ENCODE measurements at regions of chr15 and their contacts with region 1.

Region 1: GRCh38 chr15:67914537-67915460 is 75.0 kb upstream of the RNU6-1 start:
- DNase-seq: peak; percentile 29 to 80
- H3K4me3 ChIP-seq: peak overlapping the region; percentile 26 to 43
- H3K27ac ChIP-seq: peak overlapping the region; percentile 87 to 92
- H3K4me1 ChIP-seq: peaks cover 13 to 54% of the 10 kb centered on the region in 2 donors
- H3K27me3 ChIP-seq: no peaks in the 10 kb centered on the region
- CTCF ChIP-seq: no peak

Region 2: DNA sequence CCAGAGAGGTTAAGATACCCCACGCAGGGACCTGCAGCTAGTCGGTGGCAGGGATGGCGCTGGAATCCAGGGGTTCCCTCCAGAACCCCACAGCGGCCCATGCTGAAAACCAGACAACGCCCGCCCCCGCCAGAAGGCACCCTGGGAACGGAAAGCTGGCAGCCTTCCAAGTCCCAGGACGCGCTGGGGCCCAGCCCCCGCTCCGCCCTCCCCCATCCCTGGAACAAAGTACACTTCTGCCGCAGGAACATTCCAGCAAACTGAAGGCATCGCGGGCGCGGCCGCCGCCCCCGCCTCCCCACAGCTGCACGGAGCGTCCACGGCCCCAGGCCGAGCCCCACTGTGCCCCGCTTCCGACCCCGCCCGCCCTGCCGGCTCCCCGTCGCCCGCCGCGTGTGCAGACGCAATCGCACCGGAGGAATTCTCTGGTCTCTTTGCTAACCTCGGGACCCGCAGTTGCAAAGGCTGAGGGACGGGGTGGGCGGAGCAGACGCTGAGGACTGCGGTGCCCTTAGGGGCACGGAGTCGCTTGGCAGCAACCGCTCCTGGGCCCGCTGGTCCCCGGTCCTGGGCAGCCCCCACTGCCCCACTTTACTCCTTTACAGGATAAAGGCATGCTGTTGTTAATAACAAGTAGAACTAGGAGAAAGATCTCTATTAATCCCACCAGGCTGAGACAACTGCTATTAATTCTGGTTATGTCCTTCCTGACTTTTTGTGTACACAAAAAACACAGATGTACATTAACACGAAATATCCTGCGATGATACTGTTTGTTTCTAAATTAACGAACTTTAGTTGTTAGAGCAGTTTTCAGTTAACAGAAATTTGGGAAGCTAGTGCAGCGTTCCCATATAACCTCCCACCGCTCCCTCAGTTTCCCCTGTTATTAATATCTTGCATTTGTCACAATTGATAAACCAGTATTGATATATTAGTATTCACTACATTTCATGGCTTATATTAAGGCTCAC is 30.0 kb before region 1 on chr15:
- intact Hi-C with region 1: loop called (anchors 2 kb)
- DNase-seq: peak; percentile 30 to 88
- H3K4me3 ChIP-seq: peak overlapping the region; percentile 60 to 67
- H3K27ac ChIP-seq: peak overlapping the region; percentile 54 to 81
- H3K4me1 ChIP-seq: peaks cover 0 to 4% of the 10 kb centered on the region in 2 donors
- H3K27me3 ChIP-seq: no peaks in the 10 kb centered on the region
- CTCF ChIP-seq: no peak

Region 3: DNA sequence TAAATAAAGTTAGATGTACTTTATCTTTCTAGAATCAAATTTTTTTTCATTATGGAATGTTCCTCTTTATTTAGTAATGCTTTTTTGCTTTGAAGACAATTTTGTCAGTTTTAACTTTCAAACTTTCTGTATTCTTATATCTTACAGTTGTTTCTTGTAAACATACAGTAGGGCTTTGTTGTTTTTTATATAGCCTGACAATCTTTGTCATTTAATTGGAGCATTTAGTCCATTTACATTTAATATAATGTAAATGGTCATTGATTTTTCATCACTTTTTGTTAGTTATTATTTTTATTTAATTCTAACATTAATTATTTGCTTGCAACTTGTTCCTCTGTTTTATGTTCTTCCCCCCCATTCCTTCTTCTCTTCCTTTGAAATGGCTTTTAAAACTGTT is 19.6 kb before region 1 on chr15:
- intact Hi-C with region 1: no loop called
- DNase-seq: no peak
- H3K4me3 ChIP-seq: no peak overlapping the region
- H3K27ac ChIP-seq: no peak overlapping the region
- H3K4me1 ChIP-seq: no peaks in the 10 kb centered on the region
- H3K27me3 ChIP-seq: no peaks in the 10 kb centered on the region
- CTCF ChIP-seq: no peak

Region 4: DNA sequence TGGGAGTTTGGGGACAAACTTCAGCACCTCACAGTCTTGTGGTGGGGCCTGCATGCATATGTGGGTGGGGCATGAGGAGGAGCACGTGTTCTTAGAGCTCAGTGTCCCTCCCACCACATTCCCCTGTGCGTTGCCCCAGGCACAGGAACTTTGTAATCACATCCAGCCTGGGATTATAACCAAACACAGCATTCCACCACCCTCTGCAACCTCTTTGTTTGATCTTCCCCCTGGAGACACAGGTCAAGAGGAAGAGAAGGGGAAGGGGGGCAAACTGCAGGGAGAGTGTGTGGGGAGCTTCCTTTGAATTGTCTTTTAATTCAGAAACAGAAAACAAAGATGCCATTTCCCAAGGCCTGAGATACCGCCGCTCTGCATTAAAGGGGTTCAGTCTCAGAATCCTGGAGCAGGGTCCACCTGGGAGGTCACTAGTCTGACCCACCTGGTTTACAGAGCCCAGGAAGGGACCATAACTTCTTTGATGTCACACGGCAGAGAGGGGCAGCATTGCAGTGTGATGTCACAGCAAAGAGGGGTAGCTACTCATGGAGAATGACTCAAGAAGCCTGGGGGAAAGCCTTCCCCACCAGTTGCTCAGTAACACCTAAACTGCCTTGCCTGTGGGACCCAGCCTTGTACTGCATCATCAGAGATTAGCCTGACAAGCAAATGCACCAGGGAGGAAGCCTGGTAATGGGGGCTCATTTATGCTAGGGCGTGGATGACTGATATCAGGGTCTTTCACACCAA is 31.3 kb after region 1 on chr15:
- intact Hi-C with region 1: loop called (anchors 1 kb)
- DNase-seq: no peak
- H3K4me3 ChIP-seq: no peak overlapping the region
- H3K27ac ChIP-seq: peak overlapping the region; percentile 11 to 83
- H3K4me1 ChIP-seq: peaks cover 3 to 34% of the 10 kb centered on the region in 2 donors
- H3K27me3 ChIP-seq: no peaks in the 10 kb centered on the region
- CTCF ChIP-seq: no peak

Region 5: DNA sequence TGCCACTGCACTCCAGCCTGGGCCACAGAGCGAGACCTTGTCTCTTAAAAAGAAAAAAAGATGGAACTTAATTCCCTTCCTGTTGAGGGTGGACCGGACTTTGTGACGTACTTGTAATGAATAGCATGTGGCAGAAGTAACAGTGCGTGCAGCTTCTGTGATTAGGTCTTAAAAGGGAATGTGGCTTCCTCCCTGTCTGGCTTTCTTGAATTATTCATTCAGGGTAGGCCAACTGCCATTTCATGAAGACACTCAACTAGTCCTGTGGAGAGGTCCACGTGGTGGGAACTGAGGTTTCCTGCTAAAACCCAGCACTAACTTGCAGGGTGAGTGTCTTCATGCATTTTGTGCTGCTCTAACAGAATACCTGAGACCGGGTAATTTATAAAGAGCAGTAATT is 40.5 kb after region 1 on chr15:
- intact Hi-C with region 1: loop called (anchors 5 kb)
- DNase-seq: no peak
- H3K4me3 ChIP-seq: no peak overlapping the region
- H3K27ac ChIP-seq: peak overlapping the region; percentile 15 to 62
- H3K4me1 ChIP-seq: peaks cover 0 to 7% of the 10 kb centered on the region in 2 donors
- H3K27me3 ChIP-seq: no peaks in the 10 kb centered on the region
- CTCF ChIP-seq: no peak

Region 6: GRCh38 chr15:68149059-68149458 is 234.3 kb after region 1 on chr15:
- intact Hi-C with region 1: no loop called
- DNase-seq: no peak
- H3K4me3 ChIP-seq: no peak overlapping the region
- H3K27ac ChIP-seq: no peak overlapping the region
- H3K4me1 ChIP-seq: no peaks in the 10 kb centered on the region
- H3K27me3 ChIP-seq: no peaks in the 10 kb centered on the region
- CTCF ChIP-seq: no peak

Measured in ascending aorta (tissue), 2 donors.